ENCODE measurements at regions of chr17 and their contacts with region 1.

Region 1: GRCh38 chr17:28763804-28764266 is 20.0 kb downstream of the TRAF4 start:
- DNase-seq: peak in 2 of 4 donors; percentile 63 to 80
- ATAC-seq: peak; percentile 79
- H3K4me3 ChIP-seq: no peak overlapping the region
- H3K27ac ChIP-seq: no peak overlapping the region
- H3K4me1 ChIP-seq: peaks cover 5 to 31% of the 10 kb centered on the region in 2 donors
- H3K27me3 ChIP-seq: no peaks in the 10 kb centered on the region
- CTCF ChIP-seq: peak; percentile 91

Region 2: GRCh38 chr17:28661635-28662537 is 101.9 kb before region 1 on chr17 and contains the starts of genes SDF2 and SUPT6H:
- intact Hi-C with region 1: no loop called
- DNase-seq: peak; percentile 90 to 96 (median 94)
- ATAC-seq: peak; percentile 96
- H3K4me3 ChIP-seq: peak within 1 kb of the TSS; percentile 79 to 84
- H3K27ac ChIP-seq: peak within 1 kb of the TSS; percentile 91 to 96
- H3K4me1 ChIP-seq: peaks cover 18 to 58% of the 10 kb centered on the region in 2 donors
- H3K27me3 ChIP-seq: no peaks in the 10 kb centered on the region
- CTCF ChIP-seq: no peak
- polyA plus RNA-seq, gene SDF2: 65.3 to 74.6 (median 70.6) TPM
- polyA plus RNA-seq, gene SUPT6H: 71.1 to 76.1 (median 74.1) TPM

Region 3: GRCh38 chr17:28902819-28903545 is 139.1 kb after region 1 on chr17 and contains the start of gene DHRS13:
- intact Hi-C with region 1: loop called in 1 of 2 experiments (anchors 5 kb)
- DNase-seq: peak; percentile 87 to 98 (median 92)
- ATAC-seq: peak; percentile 96
- H3K4me3 ChIP-seq: peak within 1 kb of the TSS; percentile 54 to 79
- H3K27ac ChIP-seq: peak within 1 kb of the TSS; percentile 87 to 92
- H3K4me1 ChIP-seq: peaks cover 5 to 47% of the 10 kb centered on the region in 2 donors
- H3K27me3 ChIP-seq: no peaks in the 10 kb centered on the region
- CTCF ChIP-seq: peak; percentile 93
- polyA plus RNA-seq, gene DHRS13: 5.2 to 7.9 (median 6.5) TPM